Tibial artery (tissue), 4 donors: ENCODE measurements at regions of chr22 and their contacts with region 1.

Region 1: DNA sequence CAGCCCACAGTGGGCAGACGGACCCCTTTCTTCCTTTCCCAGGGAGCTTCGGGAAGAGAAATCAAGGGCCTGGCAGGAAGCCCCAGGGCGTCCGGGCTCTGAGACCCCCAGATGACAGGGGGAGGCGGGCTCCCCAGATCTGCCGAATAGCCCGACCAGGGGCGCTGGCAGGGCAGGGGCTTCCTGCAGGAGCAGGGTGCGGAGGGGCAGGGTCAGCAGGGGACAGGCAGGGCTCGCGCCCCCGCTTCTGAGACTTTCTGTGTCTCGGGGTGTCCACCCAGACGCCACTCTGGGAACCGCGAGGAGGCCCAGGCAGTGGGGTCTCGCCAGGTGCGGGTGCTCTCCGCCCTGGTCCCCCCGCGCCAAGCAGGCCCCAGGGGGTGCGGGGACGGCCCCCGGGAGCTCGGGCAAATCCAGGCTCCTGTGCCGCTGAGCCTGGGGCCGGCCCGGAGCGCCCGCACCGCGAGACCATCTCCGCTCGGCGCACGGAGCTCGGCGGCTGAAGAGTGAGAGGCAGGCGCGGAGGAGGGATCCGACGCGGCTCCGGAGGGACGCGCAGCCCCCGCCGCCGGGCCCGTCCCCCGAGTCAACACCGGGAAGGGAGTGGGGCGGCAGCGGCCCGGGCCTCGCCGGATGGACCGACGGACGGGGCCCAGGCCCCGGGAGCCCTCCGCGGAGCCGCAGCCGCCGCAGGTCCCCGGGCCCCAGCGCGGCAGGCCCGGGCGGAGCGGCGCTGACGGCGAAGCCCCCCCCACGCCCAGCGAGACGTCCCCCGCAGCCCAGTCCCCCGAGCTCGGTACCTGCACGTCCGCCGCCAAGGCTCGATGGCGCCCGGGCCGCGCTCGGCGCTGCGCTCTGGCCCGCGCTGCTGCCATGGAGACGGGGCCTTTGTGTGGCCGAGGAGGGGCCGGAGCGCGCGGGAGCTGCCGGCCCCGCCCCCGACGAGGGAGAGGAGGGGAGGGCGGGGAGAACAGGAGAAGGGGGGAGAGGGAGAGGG is at the start of gene PLXNB2:
- DNase-seq: peak; percentile 82 to 91
- H3K4me3 ChIP-seq: peak within 1 kb of the TSS; percentile 72 to 86
- H3K27ac ChIP-seq: peak within 1 kb of the TSS; percentile 92 to 95
- H3K4me1 ChIP-seq: peaks cover 19 to 61% (median 59%) of the 10 kb centered on the region in 4 donors
- H3K27me3 ChIP-seq: no peaks in the 10 kb centered on the region
- CTCF ChIP-seq: no peak

Region 2: DNA sequence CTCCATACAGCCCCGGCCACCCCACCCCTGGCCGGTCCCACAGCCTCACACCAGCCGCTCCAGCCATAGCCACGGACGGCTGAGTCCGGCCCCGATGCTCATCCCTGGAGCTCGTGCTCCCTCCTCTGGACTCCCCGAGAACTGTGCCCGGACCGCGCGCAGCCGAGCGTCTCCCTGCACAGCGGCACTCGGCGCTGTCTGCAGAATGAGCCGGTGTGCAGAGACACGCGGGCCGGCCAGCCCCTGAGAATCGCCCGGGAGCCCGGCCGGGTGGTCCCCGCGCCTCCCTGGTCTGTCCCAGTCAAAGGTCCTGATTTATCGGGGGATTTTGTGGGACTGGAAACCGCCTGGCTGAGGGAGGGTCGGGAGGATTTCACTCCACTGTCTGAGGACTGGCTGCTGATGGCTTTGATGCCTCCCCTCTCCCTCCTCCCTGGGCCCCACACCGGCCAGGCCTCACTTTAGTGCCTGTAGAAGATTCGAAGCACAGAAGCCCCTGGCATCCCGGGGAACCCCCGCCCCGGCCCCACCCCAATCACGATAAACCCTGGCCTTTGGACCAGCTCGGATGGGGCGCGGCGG is 582.1 kb before region 1 on chr22:
- intact Hi-C with region 1: no loop called
- DNase-seq: peak in 1 of 2 donors; percentile 45
- H3K4me3 ChIP-seq: peak overlapping the region in 1 of 2 donors; percentile 24
- H3K27ac ChIP-seq: no peak overlapping the region
- H3K4me1 ChIP-seq: peaks cover 0 to 5% (median 0%) of the 10 kb centered on the region in 4 donors
- H3K27me3 ChIP-seq: peaks cover 0 to 49% of the 10 kb centered on the region in 2 donors
- CTCF ChIP-seq: peak; percentile 29 to 31

Region 3: GRCh38 chr22:49960159-49961004 is 346.7 kb before region 1 on chr22 and contains the start of gene PIM3:
- intact Hi-C with region 1: loop called (anchors 10 kb)
- DNase-seq: peak; percentile 93 to 97
- H3K4me3 ChIP-seq: peak within 1 kb of the TSS; percentile 81 to 85
- H3K27ac ChIP-seq: peak within 1 kb of the TSS; percentile 88 to 89
- H3K4me1 ChIP-seq: peaks cover 0 to 58% (median 29%) of the 10 kb centered on the region in 4 donors
- H3K27me3 ChIP-seq: no peaks in the 10 kb centered on the region
- CTCF ChIP-seq: no peak

Region 4: DNA sequence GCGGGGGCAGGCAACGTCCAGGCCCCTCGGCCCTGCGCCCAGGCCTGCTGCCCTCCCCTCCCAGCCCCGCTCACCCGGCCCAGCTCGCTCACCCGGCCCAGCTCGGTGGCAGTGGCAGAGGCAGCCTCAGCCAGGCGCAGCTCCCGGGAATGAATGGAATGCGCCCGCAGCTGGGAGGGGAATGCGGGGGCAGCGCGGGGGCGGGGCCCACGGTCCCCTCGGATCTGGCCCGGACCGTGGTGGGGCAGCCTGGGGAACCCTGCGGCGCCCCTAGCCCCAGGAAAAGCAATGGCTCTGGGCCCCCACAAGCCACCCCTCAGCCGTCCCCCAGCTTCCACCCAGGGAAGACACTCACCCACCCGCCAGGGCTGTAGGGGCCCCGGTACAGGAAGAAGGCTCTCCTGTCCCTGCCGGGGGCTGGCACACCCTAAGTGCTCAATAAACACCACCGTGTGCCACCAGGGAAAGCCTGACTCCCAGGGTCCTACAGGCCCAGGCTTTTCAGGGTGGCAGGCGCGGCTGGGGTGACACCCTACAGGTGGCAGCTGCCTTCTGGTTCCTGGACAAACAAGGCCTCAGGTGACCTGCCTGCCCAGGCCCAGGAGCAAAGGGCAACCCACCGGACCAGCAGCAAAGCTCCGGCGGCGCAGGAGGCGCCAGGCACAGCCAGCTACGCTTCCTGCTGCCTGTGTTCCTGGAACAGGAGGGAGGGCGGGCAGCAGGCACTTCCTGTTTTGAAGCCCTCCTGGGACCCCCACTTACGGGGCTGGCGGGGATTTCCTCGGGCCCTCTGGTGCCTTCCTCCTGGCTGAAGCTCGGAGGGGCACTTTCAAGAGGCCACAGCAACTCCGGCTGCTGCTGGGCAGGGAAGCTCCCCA is 13.4 kb before region 1 on chr22:
- intact Hi-C with region 1: loop called (anchors 2 kb)
- DNase-seq: peak in 1 of 2 donors; percentile 88
- H3K4me3 ChIP-seq: peak overlapping the region; percentile 28 to 45
- H3K27ac ChIP-seq: peak overlapping the region; percentile 86 to 91
- H3K4me1 ChIP-seq: peaks cover 10 to 91% (median 65%) of the 10 kb centered on the region in 4 donors
- H3K27me3 ChIP-seq: no peaks in the 10 kb centered on the region
- CTCF ChIP-seq: no peak